PC-9 (cell line): ENCODE measurements at regions of chr3 and their contacts with region 1.

Region 1: GRCh38 chr3:174397848-174398247 is 461.3 kb upstream of the NAALADL2 start:
- DNase-seq: peak in 1 of 2 experiments; percentile 51
- H3K4me3 ChIP-seq: no peak overlapping the region
- H3K27ac ChIP-seq: no peak overlapping the region
- H3K4me1 ChIP-seq: no peaks in the 10 kb centered on the region
- H3K27me3 ChIP-seq: no peaks in the 10 kb centered on the region
- CTCF ChIP-seq: peak; percentile 79

Region 2: GRCh38 chr3:174125267-174125824 is 272.5 kb before region 1 on chr3:
- CTCF ChIA-PET with region 1: no interaction called
- POLR2A ChIA-PET with region 1: no interaction called
- intact Hi-C with region 1: loop called (anchors 5 kb)
- DNase-seq: peak in 1 of 2 experiments; percentile 8
- H3K4me3 ChIP-seq: no peak overlapping the region
- H3K27ac ChIP-seq: no peak overlapping the region
- H3K4me1 ChIP-seq: peaks cover 13% of the 10 kb centered on the region
- H3K27me3 ChIP-seq: no peaks in the 10 kb centered on the region
- CTCF ChIP-seq: peak; percentile 55; the same call in 1 of the 2 replicates

Region 3: GRCh38 chr3:174303907-174304560 is 93.8 kb before region 1 on chr3:
- CTCF ChIA-PET with region 1: no interaction called
- POLR2A ChIA-PET with region 1: interaction called, 11 read pairs
- intact Hi-C with region 1: no loop called
- DNase-seq: no peak
- H3K4me3 ChIP-seq: no peak overlapping the region
- H3K27ac ChIP-seq: no peak overlapping the region
- H3K4me1 ChIP-seq: no peaks in the 10 kb centered on the region
- H3K27me3 ChIP-seq: no peaks in the 10 kb centered on the region
- CTCF ChIP-seq: no peak